Activated CD4-positive, alpha-beta T cell treated with anti-CD3 and anti-CD28 coated beads for 36 hours (primary cell): ENCODE measurements at regions of chr5 and their contacts with region 1.

Region 1: GRCh38 chr5:178551059-178551458 is 39.1 kb downstream of the COL23A1 start:
- DNase-seq: no peak
- ATAC-seq: no peak
- H3K4me3 Mint-ChIP-seq: no peak overlapping the region
- H3K27ac Mint-ChIP-seq: no peak overlapping the region
- H3K4me1 Mint-ChIP-seq: no peaks in the 10 kb centered on the region
- H3K27me3 Mint-ChIP-seq: no peaks in the 10 kb centered on the region

Region 2: DNA sequence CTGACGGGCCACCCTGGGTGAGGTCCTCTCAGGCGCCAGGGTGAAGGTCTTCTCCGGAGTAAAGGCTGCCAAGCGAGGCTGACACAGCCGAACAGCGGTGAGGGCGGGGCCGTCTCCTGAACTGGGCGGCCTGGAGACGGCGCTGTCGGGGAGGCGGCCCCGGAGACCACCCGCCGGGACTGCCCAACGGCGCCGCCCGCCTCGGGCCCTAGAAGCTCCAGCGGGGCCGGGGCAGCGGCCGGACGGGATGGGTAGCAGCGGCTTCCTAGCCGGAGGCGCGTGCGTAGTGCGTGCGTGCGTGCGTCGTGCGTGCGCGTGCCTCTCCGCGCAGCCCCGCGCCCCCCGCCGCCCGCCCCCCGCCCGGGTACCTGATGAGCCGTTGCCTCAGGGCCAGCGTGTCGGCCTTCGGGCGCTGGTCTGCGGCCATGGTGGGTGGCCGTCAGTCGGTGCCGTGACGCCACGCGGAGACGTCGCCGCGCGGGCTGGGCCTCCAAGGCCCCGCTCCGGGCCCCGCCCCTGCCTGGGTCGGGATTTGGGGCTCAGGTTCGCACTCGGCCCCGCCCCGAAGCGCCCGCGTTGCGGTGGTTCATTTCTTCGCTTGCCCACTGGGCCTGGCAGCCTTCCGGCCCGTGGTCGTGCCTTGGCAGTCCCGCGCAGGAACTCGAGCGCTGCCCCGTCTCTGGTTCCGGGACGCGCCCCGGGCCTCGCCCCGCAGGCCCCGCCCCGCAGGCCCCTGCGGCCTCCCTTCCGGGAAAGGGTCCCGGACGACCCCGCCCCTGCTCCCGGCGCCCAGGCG is 318.7 kb before region 1 on chr5 and contains the start of gene PHYKPL:
- CTCF ChIA-PET with region 1: interaction called, 3 read pairs
- POLR2A ChIA-PET with region 1: no interaction called
- intact Hi-C with region 1: loop called (anchors 1 kb)
- DNase-seq: peak; percentile 81
- ATAC-seq: peak; percentile 70
- H3K4me3 Mint-ChIP-seq: peak within 1 kb of the TSS; percentile 80
- H3K27ac Mint-ChIP-seq: peak within 1 kb of the TSS; percentile 84
- H3K4me1 Mint-ChIP-seq: peaks cover 56% of the 10 kb centered on the region
- H3K27me3 Mint-ChIP-seq: no peaks in the 10 kb centered on the region
- total RNA-seq, gene PHYKPL: 67.2 to 68.4 TPM

Region 3: GRCh38 chr5:178279725-178280438 is 271.2 kb before region 1 on chr5:
- CTCF ChIA-PET with region 1: interaction called, 6 read pairs
- POLR2A ChIA-PET with region 1: no interaction called
- intact Hi-C with region 1: loop called (anchors 1 to 2 kb)
- DNase-seq: peak; percentile 82
- ATAC-seq: peak; percentile 53
- H3K4me3 Mint-ChIP-seq: no peak overlapping the region
- H3K27ac Mint-ChIP-seq: no peak overlapping the region
- H3K4me1 Mint-ChIP-seq: peaks cover 3% of the 10 kb centered on the region
- H3K27me3 Mint-ChIP-seq: peaks cover 8% of the 10 kb centered on the region